Posterior cingulate gyrus (tissue), 11 donors: ENCODE measurements at regions of chr11 and their contacts with region 1.

Region 1: DNA sequence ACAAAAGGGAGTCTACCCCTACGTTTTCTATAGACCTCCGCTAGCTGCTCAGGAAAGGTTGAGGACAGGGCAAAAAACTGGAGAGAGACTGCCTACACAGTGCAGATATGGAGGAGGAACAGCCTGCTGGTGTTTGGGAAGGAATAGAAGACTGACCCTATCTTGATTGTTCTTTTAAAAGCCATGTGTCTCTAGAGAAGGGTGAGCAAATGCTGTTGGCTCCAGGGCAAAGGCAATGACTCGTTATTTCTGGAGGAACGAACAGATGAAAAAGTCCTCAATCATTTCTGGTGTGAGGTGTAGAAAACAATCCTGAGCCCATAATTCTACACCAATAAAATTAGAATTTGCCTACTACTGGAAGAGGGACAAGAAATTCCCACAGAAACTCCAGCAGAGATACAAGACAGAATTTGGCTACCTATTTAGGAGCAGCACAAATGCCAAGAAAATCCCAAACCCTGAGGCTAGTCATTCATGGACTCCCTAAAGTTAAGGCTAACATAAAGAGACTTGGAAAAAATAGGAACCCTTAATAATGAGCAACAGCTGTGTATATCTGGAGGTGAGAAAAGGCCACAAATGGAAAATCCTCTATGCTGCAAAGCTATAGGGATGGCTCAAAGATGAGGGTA is 1206.3 kb upstream of the CNTN5 start:
- DNase-seq: no peak

Region 2: GRCh38 chr11:97893612-97894011 is 79.2 kb after region 1 on chr11:
- intact Hi-C with region 1: no loop called
- DNase-seq: no peak

Region 3: DNA sequence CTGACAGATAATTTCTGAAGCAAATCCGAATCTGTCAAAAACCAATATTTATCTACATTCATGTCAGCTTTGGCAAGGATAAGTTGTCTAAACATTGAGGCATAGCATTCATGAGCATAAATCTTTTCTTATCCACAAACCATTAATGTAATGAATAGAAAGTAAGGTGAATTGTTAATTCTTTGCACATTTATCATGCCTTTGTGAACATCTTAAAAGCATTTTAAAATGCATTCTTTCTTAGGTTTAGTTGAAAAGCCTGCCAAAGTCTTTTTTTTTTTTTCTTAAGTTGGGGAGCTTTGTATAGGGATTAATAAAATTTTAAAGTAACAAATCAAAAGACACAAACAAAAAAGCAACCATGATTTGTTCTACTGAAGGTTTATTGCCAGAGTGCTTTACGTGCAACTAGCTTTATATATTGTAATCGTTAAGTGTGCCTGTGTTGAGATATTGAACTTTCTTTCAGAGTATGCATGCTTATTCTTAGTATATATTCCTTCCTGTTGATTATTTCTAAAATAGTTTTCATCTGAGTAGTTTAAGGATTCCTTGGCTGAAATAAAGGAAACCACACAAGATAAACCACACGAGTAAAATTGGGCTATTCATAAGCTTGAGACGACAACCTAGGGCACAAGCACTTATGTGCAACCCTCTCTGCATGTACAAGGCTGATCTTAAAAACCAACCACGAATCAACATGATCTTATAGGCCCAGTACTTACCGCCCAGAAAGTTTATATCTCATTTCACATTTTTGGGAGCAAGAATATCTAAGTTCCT is 95.4 kb after region 1 on chr11:
- intact Hi-C with region 1: no loop called
- DNase-seq: no peak

Region 4: GRCh38 chr11:98090861-98091505 is 276.5 kb after region 1 on chr11:
- intact Hi-C with region 1: loop called (anchors 10 kb)
- DNase-seq: no peak